ENCODE measurements at regions of chr15 and their contacts with region 1.

Region 1: GRCh38 chr15:22980189-22981050 is at the start of gene CYFIP1:
- DNase-seq: peak; percentile 50
- ATAC-seq: peak; percentile 61
- H3K4me3 Mint-ChIP-seq: peak within 1 kb of the TSS; percentile 84
- H3K27ac Mint-ChIP-seq: peak within 1 kb of the TSS; percentile 59
- H3K4me1 Mint-ChIP-seq: peaks cover 8% of the 10 kb centered on the region
- H3K27me3 Mint-ChIP-seq: peaks cover 9% of the 10 kb centered on the region
- total RNA-seq, gene CYFIP1: 31.1 to 32.8 TPM

Region 2: GRCh38 chr15:22786868-22787698 is 193.3 kb before region 1 on chr15:
- CTCF ChIA-PET with region 1: no interaction called
- POLR2A ChIA-PET with region 1: no interaction called
- intact Hi-C with region 1: loop called in 1 of 2 experiments (anchors 5 kb)
- DNase-seq: peak; percentile 43
- ATAC-seq: peak; percentile 20
- H3K4me3 Mint-ChIP-seq: peak overlapping the region; percentile 83
- H3K27ac Mint-ChIP-seq: peak overlapping the region; percentile 80
- H3K4me1 Mint-ChIP-seq: peaks cover 35% of the 10 kb centered on the region
- H3K27me3 Mint-ChIP-seq: no peaks in the 10 kb centered on the region

Region 3: GRCh38 chr15:22855791-22856190 is 124.6 kb before region 1 on chr15:
- CTCF ChIA-PET with region 1: no interaction called
- POLR2A ChIA-PET with region 1: no interaction called
- intact Hi-C with region 1: no loop called
- DNase-seq: no peak
- ATAC-seq: no peak
- H3K4me3 Mint-ChIP-seq: no peak overlapping the region
- H3K27ac Mint-ChIP-seq: no peak overlapping the region
- H3K4me1 Mint-ChIP-seq: peaks cover 8% of the 10 kb centered on the region
- H3K27me3 Mint-ChIP-seq: no peaks in the 10 kb centered on the region

Region 4: DNA sequence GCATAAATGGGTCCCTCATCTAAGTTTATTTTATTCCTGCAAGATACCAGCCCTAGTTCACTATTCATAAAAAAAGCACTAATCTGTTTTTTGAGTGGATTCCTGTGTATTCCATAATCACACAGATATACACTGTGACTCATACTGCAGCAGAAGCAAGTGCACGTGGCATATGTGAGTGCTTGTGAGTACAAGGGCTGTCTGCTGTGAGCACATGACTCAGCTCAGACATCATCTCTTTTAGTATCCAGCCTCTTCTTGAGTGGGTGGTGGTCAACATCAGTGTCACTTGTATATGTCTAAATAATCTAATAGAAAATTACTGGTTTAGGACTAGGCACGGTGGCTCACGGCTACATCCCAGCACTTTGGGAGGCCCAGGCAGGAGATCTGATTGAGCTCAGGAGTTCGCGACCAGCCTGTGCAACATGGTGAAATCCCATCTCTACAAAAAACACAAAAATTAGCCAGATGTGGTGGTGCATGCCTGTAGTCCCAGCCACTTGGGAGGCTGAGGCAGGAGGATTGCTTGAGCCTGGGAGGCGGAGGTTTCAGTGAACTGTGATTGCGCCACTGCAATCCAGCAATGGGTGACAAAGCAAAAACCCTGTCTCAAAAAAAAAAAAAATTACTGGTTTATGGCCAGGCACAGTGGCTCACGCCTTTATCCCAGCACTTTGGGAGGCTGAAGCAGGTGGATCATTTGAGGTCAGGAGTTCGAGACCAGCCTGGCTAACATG is 92.1 kb before region 1 on chr15:
- CTCF ChIA-PET with region 1: no interaction called
- POLR2A ChIA-PET with region 1: no interaction called
- intact Hi-C with region 1: loop called in 1 of 2 experiments (anchors 10 kb)
- DNase-seq: no peak
- ATAC-seq: no peak
- H3K4me3 Mint-ChIP-seq: no peak overlapping the region
- H3K27ac Mint-ChIP-seq: no peak overlapping the region
- H3K4me1 Mint-ChIP-seq: no peaks in the 10 kb centered on the region
- H3K27me3 Mint-ChIP-seq: no peaks in the 10 kb centered on the region

Region 5: DNA sequence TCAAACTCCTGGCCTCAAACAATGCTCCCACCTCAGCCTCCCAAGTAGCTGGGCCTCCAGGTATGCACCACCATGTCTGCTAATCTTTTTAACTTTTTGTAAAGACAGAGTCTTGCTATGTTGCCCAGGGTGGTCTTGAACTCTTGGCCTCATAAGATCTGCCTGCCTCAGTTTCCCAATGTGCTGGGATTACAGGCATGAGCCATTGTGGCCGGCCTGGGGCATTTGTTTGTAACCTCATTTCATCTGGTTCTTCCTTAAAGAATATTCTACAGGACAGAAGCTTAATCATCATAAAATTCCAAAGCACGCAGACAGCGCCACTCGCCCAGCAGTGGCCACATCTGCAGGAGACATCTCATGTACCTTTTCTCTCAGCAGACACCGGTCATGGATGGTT is 23.3 kb after region 1 on chr15:
- CTCF ChIA-PET with region 1: no interaction called
- POLR2A ChIA-PET with region 1: no interaction called
- intact Hi-C with region 1: no loop called
- DNase-seq: no peak
- ATAC-seq: no peak
- H3K4me3 Mint-ChIP-seq: no peak overlapping the region
- H3K27ac Mint-ChIP-seq: no peak overlapping the region
- H3K4me1 Mint-ChIP-seq: no peaks in the 10 kb centered on the region
- H3K27me3 Mint-ChIP-seq: no peaks in the 10 kb centered on the region